PC-3 (cell line): ENCODE measurements at regions of chr6 and their contacts with region 1.

Region 1: GRCh38 chr6:119110601-119111548 is 32.4 kb upstream of the FAM184A start:
- DNase-seq: peak; percentile 73
- ATAC-seq: peak; percentile 76
- H3K4me3 ChIP-seq: no peak overlapping the region
- H3K27ac ChIP-seq: no peak overlapping the region
- H3K4me1 ChIP-seq: no peaks in the 10 kb centered on the region
- H3K27me3 ChIP-seq: no peaks in the 10 kb centered on the region
- CTCF ChIP-seq: peak; percentile 73

Region 2: GRCh38 chr6:118678866-118679265 is 432.0 kb before region 1 on chr6:
- CTCF ChIA-PET with region 1: no interaction called
- POLR2A ChIA-PET with region 1: no interaction called
- intact Hi-C with region 1: no loop called
- DNase-seq: peak; percentile 13
- ATAC-seq: no peak; the same call in 1 of the 2 replicates
- H3K4me3 ChIP-seq: no peak overlapping the region
- H3K27ac ChIP-seq: no peak overlapping the region
- H3K4me1 ChIP-seq: peaks cover 17% of the 10 kb centered on the region
- H3K27me3 ChIP-seq: no peaks in the 10 kb centered on the region
- CTCF ChIP-seq: no peak

Region 3: DNA sequence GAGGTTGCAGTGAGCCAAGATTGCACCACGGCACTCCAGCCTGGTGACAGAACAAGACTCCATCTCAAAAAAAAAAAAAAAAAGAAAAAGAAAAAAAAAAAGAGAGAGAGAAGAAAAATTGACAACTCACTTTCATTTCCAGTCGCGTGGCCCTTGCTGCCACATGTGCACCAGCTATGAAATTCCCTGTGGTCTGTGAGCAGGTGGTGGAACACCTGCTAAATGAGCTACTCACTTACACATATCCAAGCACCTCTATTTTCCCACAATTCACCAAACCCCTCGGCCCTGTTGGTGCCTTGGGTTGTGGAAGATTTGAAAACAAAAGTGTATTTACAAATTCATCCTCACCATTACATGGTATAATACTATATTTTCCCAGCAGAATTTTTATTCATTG is 322.2 kb before region 1 on chr6:
- CTCF ChIA-PET with region 1: no interaction called
- POLR2A ChIA-PET with region 1: no interaction called
- intact Hi-C with region 1: no loop called
- DNase-seq: no peak
- ATAC-seq: no peak
- H3K4me3 ChIP-seq: no peak overlapping the region
- H3K27ac ChIP-seq: no peak overlapping the region
- H3K4me1 ChIP-seq: peaks cover 16% of the 10 kb centered on the region
- H3K27me3 ChIP-seq: no peaks in the 10 kb centered on the region
- CTCF ChIP-seq: no peak

Region 4: GRCh38 chr6:118963003-118963402 is 147.9 kb before region 1 on chr6:
- CTCF ChIA-PET with region 1: interaction called, 19 read pairs
- POLR2A ChIA-PET with region 1: no interaction called
- intact Hi-C with region 1: loop called (anchors 1 kb)
- DNase-seq: peak; percentile 21
- ATAC-seq: no peak
- H3K4me3 ChIP-seq: no peak overlapping the region
- H3K27ac ChIP-seq: no peak overlapping the region
- H3K4me1 ChIP-seq: no peaks in the 10 kb centered on the region
- H3K27me3 ChIP-seq: no peaks in the 10 kb centered on the region
- CTCF ChIP-seq: peak; percentile 45

Region 5: GRCh38 chr6:118968416-118968815 is 142.5 kb before region 1 on chr6:
- CTCF ChIA-PET with region 1: interaction called, 19 read pairs
- POLR2A ChIA-PET with region 1: no interaction called
- intact Hi-C with region 1: loop called (anchors 1 kb)
- DNase-seq: peak; percentile 37
- ATAC-seq: peak; percentile 54; the same call in 1 of the 2 replicates
- H3K4me3 ChIP-seq: no peak overlapping the region
- H3K27ac ChIP-seq: no peak overlapping the region
- H3K4me1 ChIP-seq: no peaks in the 10 kb centered on the region
- H3K27me3 ChIP-seq: no peaks in the 10 kb centered on the region
- CTCF ChIP-seq: peak; percentile 46; the same call in 1 of the 2 replicates